ENCODE measurements at regions of chr18 and their contacts with region 1.

Region 1: DNA sequence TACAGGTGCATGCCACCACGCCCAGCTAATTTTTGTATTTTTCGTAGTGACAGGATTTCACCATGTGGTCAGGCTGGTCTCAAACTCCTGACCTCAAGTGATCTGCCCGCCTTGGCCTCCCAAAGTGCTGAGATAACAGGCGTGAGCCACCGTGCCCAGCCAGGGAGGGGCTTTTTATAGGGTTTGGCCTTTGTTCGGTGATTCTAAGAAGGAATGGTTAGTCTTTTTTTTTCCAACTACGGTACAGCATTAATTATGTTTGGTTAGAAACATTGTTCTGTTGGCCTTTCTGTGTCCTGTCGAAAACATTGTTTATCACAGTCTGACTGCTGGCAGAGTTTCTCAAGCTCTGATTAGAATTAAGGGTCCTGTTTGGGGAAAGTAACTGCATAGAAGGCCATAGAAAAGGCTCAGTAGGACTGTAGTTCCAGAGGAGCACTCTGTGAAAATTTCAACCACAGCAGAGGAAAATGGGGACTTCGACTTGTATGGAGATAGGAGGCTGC is 19.3 kb upstream of the SMCHD1 start:
- DNase-seq: no peak
- ATAC-seq: peak; percentile 11
- H3K4me3 ChIP-seq: peak overlapping the region; percentile 21 to 71 (median 29)
- H3K4me3 Mint-ChIP-seq: peak overlapping the region; percentile 85
- H3K27ac ChIP-seq: peak overlapping the region; percentile 96 to 99
- H3K27ac Mint-ChIP-seq: peak overlapping the region; percentile 99
- H3K4me1 ChIP-seq: peaks cover 67 to 79% of the 10 kb centered on the region in 2 donors
- H3K4me1 Mint-ChIP-seq: peaks cover 84% of the 10 kb centered on the region
- H3K27me3 ChIP-seq: no peaks in the 10 kb centered on the region
- H3K27me3 Mint-ChIP-seq: no peaks in the 10 kb centered on the region
- CTCF ChIP-seq: no peak

Region 2: GRCh38 chr18:2571200-2572143 is 64.7 kb before region 1 on chr18 and contains the starts of genes METTL4 and NDC80:
- CTCF ChIA-PET with region 1: interaction called, 25 read pairs
- POLR2A ChIA-PET with region 1: interaction called, 49 read pairs
- intact Hi-C with region 1: loop called (anchors 1 kb)
- DNase-seq: peak; percentile 95
- ATAC-seq: peak; percentile 93
- H3K4me3 ChIP-seq: peak within 1 kb of the TSS; percentile 70 to 99 (median 81)
- H3K4me3 Mint-ChIP-seq: peak within 1 kb of the TSS; percentile 99
- H3K27ac ChIP-seq: peak within 1 kb of the TSS; percentile 97 to 98
- H3K27ac Mint-ChIP-seq: peak within 1 kb of the TSS; percentile 99
- H3K4me1 ChIP-seq: peaks cover 22 to 23% of the 10 kb centered on the region in 2 donors
- H3K4me1 Mint-ChIP-seq: peaks cover 45% of the 10 kb centered on the region
- H3K27me3 ChIP-seq: no peaks in the 10 kb centered on the region
- H3K27me3 Mint-ChIP-seq: no peaks in the 10 kb centered on the region
- CTCF ChIP-seq: no peak
- total RNA-seq, gene METTL4: 23.9 and 31.6 TPM in 2 replicates
- total RNA-seq, gene NDC80: 3.7 and 3.9 TPM in 2 replicates

Region 3: DNA sequence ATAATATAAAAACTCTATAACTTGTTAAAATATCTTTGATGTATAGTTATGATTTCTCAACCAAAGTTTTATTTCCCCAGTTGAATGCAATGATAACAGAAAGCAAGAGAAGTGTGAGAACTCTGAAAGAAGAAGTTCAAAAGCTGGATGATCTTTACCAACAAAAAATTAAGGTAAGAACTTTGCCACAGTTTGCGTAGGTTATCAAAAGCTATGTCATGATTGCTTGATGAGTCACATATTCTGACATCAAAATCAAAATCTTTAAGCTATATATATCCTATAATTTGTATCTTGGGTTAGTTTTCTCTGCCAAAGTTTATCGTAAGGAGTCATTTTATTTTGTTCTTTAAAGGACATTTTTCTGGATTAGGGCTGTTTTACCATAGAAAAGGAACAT is 29.8 kb before region 1 on chr18:
- CTCF ChIA-PET with region 1: interaction called, 32 read pairs
- POLR2A ChIA-PET with region 1: interaction called, 39 read pairs
- intact Hi-C with region 1: loop called (anchors 1 kb)
- DNase-seq: peak; percentile 21
- ATAC-seq: no peak
- H3K4me3 ChIP-seq: peak overlapping the region in 1 of 5 experiments; percentile 20
- H3K4me3 Mint-ChIP-seq: peak overlapping the region; percentile 70
- H3K27ac ChIP-seq: peak overlapping the region; percentile 19 to 66
- H3K27ac Mint-ChIP-seq: peak overlapping the region; percentile 69
- H3K4me1 ChIP-seq: peaks cover 6 to 17% of the 10 kb centered on the region in 2 donors
- H3K4me1 Mint-ChIP-seq: peaks cover 22% of the 10 kb centered on the region
- H3K27me3 ChIP-seq: no peaks in the 10 kb centered on the region
- H3K27me3 Mint-ChIP-seq: no peaks in the 10 kb centered on the region
- CTCF ChIP-seq: no peak

Region 4: DNA sequence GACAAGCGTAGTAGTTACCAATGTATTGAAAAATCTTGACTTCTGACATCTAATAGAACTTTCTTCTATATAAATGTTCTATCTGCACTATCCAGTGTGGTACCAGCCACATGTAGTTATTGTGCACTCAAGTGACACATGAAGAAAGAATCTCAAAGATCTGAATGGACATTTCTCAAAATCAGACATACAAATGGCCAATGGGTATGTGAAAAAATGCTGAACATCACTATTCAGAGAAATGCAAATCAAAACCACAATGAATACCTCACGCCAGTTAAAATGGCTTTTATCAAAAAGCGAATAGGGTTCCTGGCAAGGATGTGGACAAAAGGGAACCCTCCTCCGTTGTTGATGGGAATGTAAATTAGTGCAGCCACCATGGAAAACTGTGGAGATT is 18.2 kb before region 1 on chr18:
- CTCF ChIA-PET with region 1: no interaction called
- POLR2A ChIA-PET with region 1: interaction called, 11 read pairs
- intact Hi-C with region 1: no loop called
- DNase-seq: no peak
- ATAC-seq: no peak
- H3K4me3 ChIP-seq: no peak overlapping the region
- H3K4me3 Mint-ChIP-seq: no peak overlapping the region
- H3K27ac ChIP-seq: no peak overlapping the region
- H3K27ac Mint-ChIP-seq: no peak overlapping the region
- H3K4me1 ChIP-seq: no peaks in the 10 kb centered on the region
- H3K4me1 Mint-ChIP-seq: no peaks in the 10 kb centered on the region
- H3K27me3 ChIP-seq: no peaks in the 10 kb centered on the region
- H3K27me3 Mint-ChIP-seq: no peaks in the 10 kb centered on the region
- CTCF ChIP-seq: no peak

Region 5: DNA sequence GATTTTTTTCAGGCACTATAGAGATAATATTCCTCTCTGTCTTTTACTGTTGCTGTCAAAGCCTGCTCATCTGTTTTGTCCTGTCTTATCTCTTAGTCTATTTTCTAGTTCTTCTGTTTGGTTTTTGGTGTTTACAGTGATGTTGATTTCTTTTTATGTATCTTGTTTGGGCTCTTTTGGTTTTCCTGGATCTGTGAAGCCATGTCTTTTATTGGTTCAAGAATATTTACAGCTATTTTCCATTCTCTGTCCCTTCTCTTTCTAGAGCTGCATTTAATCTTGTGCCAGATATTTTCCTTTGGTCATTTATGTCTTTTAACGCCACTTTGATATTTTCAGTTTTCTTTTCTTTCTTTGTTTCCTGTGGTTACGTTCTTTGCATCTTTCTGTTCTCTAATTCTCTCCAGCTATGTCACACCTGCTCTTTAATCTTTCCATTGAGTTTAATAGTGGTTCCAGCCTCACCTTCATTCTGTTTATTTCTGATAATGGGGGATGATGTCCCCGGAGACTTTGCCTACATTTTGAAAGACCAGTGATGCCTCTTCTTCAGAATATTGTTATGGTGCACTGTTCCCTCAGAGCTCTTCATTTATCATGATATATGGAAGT is 51.3 kb after region 1 on chr18:
- CTCF ChIA-PET with region 1: interaction called, 10 read pairs
- POLR2A ChIA-PET with region 1: interaction called, 4 read pairs
- intact Hi-C with region 1: no loop called
- DNase-seq: peak; percentile 36
- ATAC-seq: peak; percentile 61
- H3K4me3 ChIP-seq: peak overlapping the region in 1 of 5 experiments; percentile 27
- H3K4me3 Mint-ChIP-seq: peak overlapping the region; percentile 57
- H3K27ac ChIP-seq: peak overlapping the region; percentile 57 to 86
- H3K27ac Mint-ChIP-seq: peak overlapping the region; percentile 79
- H3K4me1 ChIP-seq: peaks cover 16 to 18% of the 10 kb centered on the region in 2 donors
- H3K4me1 Mint-ChIP-seq: peaks cover 38% of the 10 kb centered on the region
- H3K27me3 ChIP-seq: no peaks in the 10 kb centered on the region
- H3K27me3 Mint-ChIP-seq: no peaks in the 10 kb centered on the region
- CTCF ChIP-seq: no peak

Region 6: DNA sequence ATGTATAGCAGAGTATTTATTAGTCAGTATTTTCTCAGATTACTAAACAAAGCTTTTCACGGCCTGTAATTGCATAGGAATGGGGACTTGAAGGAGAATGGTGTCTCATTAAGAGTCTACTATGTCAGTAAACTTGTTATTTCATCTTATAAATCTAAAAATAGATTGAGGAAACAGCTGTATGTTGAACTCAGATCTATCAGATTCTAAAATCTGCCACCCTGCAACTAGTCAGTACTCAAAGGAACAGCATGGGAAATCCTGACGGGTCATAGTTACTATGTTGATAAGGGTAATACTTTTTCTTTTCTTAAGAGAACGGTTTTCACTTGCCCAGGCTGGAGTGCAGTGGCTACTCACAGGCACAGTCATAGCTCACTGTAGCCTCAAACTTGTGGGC is 140.4 kb after region 1 on chr18:
- CTCF ChIA-PET with region 1: no interaction called
- POLR2A ChIA-PET with region 1: no interaction called
- intact Hi-C with region 1: no loop called
- DNase-seq: no peak
- ATAC-seq: no peak
- H3K4me3 ChIP-seq: no peak overlapping the region
- H3K4me3 Mint-ChIP-seq: no peak overlapping the region
- H3K27ac ChIP-seq: peak overlapping the region in 1 of 2 donors; percentile 7
- H3K27ac Mint-ChIP-seq: no peak overlapping the region
- H3K4me1 ChIP-seq: no peaks in the 10 kb centered on the region
- H3K4me1 Mint-ChIP-seq: no peaks in the 10 kb centered on the region
- H3K27me3 ChIP-seq: no peaks in the 10 kb centered on the region
- H3K27me3 Mint-ChIP-seq: no peaks in the 10 kb centered on the region
- CTCF ChIP-seq: no peak

Region 7: GRCh38 chr18:3652380-3653262 is 1016.4 kb after region 1 on chr18:
- CTCF ChIA-PET with region 1: no interaction called
- POLR2A ChIA-PET with region 1: no interaction called
- intact Hi-C with region 1: no loop called
- DNase-seq: no peak
- ATAC-seq: no peak
- H3K4me3 ChIP-seq: no peak overlapping the region
- H3K4me3 Mint-ChIP-seq: no peak overlapping the region
- H3K27ac ChIP-seq: no peak overlapping the region
- H3K27ac Mint-ChIP-seq: no peak overlapping the region
- H3K4me1 ChIP-seq: no peaks in the 10 kb centered on the region
- H3K4me1 Mint-ChIP-seq: no peaks in the 10 kb centered on the region
- H3K27me3 ChIP-seq: no peaks in the 10 kb centered on the region
- H3K27me3 Mint-ChIP-seq: peaks cover 8% of the 10 kb centered on the region
- CTCF ChIP-seq: no peak